ENCODE measurements at regions of chr14 and their contacts with region 1.

Region 1: GRCh38 chr14:75982266-75983018 is 647 bp upstream of the TGFB3 start:
- DNase-seq: peak; percentile 84
- H3K4me3 Mint-ChIP-seq: peak overlapping the region; percentile 72
- H3K27ac Mint-ChIP-seq: no peak overlapping the region
- H3K4me1 Mint-ChIP-seq: peaks cover 47% of the 10 kb centered on the region
- H3K27me3 Mint-ChIP-seq: peaks cover 2% of the 10 kb centered on the region

Region 2: GRCh38 chr14:75577729-75578101 is 404.7 kb before region 1 on chr14:
- CTCF ChIA-PET with region 1: interaction called, 13 read pairs
- POLR2A ChIA-PET with region 1: no interaction called
- intact Hi-C with region 1: loop called (anchors 2 kb)
- DNase-seq: peak; percentile 87
- H3K4me3 Mint-ChIP-seq: peak overlapping the region; percentile 86
- H3K27ac Mint-ChIP-seq: peak overlapping the region; percentile 88
- H3K4me1 Mint-ChIP-seq: peaks cover 13% of the 10 kb centered on the region
- H3K27me3 Mint-ChIP-seq: no peaks in the 10 kb centered on the region

Region 3: DNA sequence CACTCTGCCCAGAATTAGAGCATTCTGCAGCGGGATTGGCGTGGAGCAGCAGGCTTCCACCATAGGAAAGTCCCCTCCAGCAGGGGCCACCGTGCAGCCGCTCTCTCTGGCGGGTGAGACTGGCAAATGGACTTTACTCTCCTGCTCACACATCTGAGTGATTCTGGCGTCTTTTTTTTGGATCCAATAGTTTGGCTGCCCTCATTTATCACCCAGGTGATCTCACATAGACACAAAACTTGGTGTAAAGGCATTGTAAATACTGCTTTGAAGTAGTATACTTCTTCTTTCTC is 130.9 kb before region 1 on chr14:
- CTCF ChIA-PET with region 1: no interaction called
- POLR2A ChIA-PET with region 1: no interaction called
- intact Hi-C with region 1: no loop called
- DNase-seq: no peak
- H3K4me3 Mint-ChIP-seq: no peak overlapping the region
- H3K27ac Mint-ChIP-seq: no peak overlapping the region
- H3K4me1 Mint-ChIP-seq: no peaks in the 10 kb centered on the region
- H3K27me3 Mint-ChIP-seq: no peaks in the 10 kb centered on the region

Region 4: GRCh38 chr14:76151398-76152339 is 169.2 kb after region 1 on chr14 and contains the start of gene GPATCH2L:
- CTCF ChIA-PET with region 1: no interaction called
- POLR2A ChIA-PET with region 1: no interaction called
- intact Hi-C with region 1: loop called (anchors 1 kb)
- DNase-seq: peak; percentile 99
- H3K4me3 Mint-ChIP-seq: peak within 1 kb of the TSS; percentile 93
- H3K27ac Mint-ChIP-seq: peak within 1 kb of the TSS; percentile 96
- H3K4me1 Mint-ChIP-seq: peaks cover 49% of the 10 kb centered on the region
- H3K27me3 Mint-ChIP-seq: no peaks in the 10 kb centered on the region
- total RNA-seq, gene GPATCH2L: 50.1 to 52.1 TPM

Measured in activated CD4-positive, alpha-beta memory T cell treated with anti-CD3 and anti-CD28 coated beads for 36 hours (primary cell).